MCF 10A (cell line): ENCODE measurements at regions of chr6 and their contacts with region 1.

Region 1: DNA sequence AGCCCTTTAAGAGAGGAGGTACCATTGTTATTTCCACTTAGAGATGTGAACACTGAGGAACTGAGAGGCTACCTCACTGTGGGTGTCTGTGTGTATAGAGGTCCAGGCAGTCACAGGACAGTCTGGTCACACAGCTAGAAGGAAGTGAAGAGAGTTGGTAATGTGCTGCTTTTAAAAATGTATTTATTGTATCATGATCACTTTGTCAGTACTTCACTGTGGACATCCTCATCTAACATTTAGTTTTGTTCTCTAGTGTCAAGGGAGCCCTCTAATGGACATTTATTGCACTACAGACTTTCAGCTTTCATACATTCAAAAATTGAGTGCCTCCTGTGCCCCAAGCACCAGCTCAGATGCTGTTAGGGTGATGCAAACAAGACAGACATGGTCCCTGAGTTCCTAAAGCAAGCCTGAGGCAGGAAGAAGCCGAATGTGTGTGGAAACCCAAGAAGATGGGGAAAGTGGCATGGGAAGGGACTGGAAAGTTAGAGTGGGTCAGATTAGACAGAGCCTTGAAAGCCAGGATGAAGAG is 123.0 kb downstream of the SLC16A10 start:
- DNase-seq: peak; percentile 69
- H3K4me3 Mint-ChIP-seq: no peak overlapping the region
- H3K27ac Mint-ChIP-seq: no peak overlapping the region
- H3K4me1 Mint-ChIP-seq: no peaks in the 10 kb centered on the region
- H3K27me3 Mint-ChIP-seq: no peaks in the 10 kb centered on the region
- CTCF ChIP-seq: peak; percentile 60

Region 2: GRCh38 chr6:110528101-110528929 is 681.9 kb before region 1 on chr6:
- CTCF ChIA-PET with region 1: no interaction called
- POLR2A ChIA-PET with region 1: no interaction called
- intact Hi-C with region 1: loop called (anchors 1 kb)
- DNase-seq: peak; percentile 76
- H3K4me3 Mint-ChIP-seq: no peak overlapping the region
- H3K27ac Mint-ChIP-seq: peak overlapping the region; percentile 66
- H3K4me1 Mint-ChIP-seq: peaks cover 21% of the 10 kb centered on the region
- H3K27me3 Mint-ChIP-seq: no peaks in the 10 kb centered on the region
- CTCF ChIP-seq: peak; percentile 76

Region 3: DNA sequence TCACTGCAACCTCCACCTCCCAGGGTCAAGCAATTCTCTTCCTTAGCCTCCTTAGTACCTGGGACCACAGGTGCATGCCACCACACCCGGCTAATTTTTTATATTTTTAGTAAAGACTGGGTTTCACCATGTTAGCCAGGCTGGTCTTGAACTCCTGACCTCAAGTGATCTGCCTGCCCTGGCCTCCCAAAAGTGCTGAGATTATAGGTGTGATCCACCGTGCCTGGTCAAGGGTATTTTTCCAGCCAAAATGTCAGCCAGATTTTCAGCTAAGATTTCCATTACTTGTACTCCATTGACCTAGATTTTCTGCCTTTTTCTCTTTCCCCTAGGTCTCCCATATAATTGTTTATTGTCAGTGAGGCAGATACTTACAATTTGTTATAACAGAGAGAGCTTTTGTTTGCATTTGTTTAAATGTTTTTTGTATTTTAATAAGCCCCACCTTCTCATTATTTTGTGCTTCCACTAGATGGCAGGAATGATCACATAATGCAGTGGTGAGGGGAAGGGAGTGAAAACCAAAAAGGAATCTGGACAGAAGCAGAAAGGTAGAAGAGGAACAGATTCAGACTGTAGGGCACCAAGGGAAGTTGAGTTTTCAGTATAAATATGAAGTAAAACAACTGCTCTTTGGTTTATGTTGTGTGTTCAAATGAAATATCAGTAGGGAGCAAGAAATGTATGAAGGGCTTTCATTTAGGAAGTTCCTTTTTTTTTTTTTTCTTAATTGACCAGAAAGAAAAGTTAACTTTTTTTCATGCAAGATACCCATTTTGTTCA is 198.7 kb before region 1 on chr6:
- CTCF ChIA-PET with region 1: interaction called, 51 read pairs
- POLR2A ChIA-PET with region 1: no interaction called
- intact Hi-C with region 1: loop called (anchors 1 kb)
- DNase-seq: peak; percentile 55
- H3K4me3 Mint-ChIP-seq: no peak overlapping the region
- H3K27ac Mint-ChIP-seq: no peak overlapping the region
- H3K4me1 Mint-ChIP-seq: no peaks in the 10 kb centered on the region
- H3K27me3 Mint-ChIP-seq: no peaks in the 10 kb centered on the region
- CTCF ChIP-seq: peak; percentile 45

Region 4: GRCh38 chr6:111052036-111052570 is 158.2 kb before region 1 on chr6:
- CTCF ChIA-PET with region 1: interaction called, 60 read pairs
- POLR2A ChIA-PET with region 1: interaction called, 4 read pairs
- intact Hi-C with region 1: loop called (anchors 1 kb)
- DNase-seq: no peak
- H3K4me3 Mint-ChIP-seq: no peak overlapping the region
- H3K27ac Mint-ChIP-seq: no peak overlapping the region
- H3K4me1 Mint-ChIP-seq: no peaks in the 10 kb centered on the region
- H3K27me3 Mint-ChIP-seq: peaks cover 14% of the 10 kb centered on the region
- CTCF ChIP-seq: no peak

Region 5: GRCh38 chr6:111057074-111057752 is 153.0 kb before region 1 on chr6:
- CTCF ChIA-PET with region 1: interaction called, 60 read pairs
- POLR2A ChIA-PET with region 1: interaction called, 8 read pairs
- intact Hi-C with region 1: loop called (anchors 1 kb)
- DNase-seq: peak; percentile 62
- H3K4me3 Mint-ChIP-seq: no peak overlapping the region
- H3K27ac Mint-ChIP-seq: no peak overlapping the region
- H3K4me1 Mint-ChIP-seq: no peaks in the 10 kb centered on the region
- H3K27me3 Mint-ChIP-seq: peaks cover 40% of the 10 kb centered on the region
- CTCF ChIP-seq: peak; percentile 56

Region 6: GRCh38 chr6:111220383-111221031 is 10.2 kb after region 1 on chr6:
- CTCF ChIA-PET with region 1: interaction called, 11 read pairs
- POLR2A ChIA-PET with region 1: interaction called, 3 read pairs
- intact Hi-C with region 1: no loop called
- DNase-seq: no peak
- H3K4me3 Mint-ChIP-seq: no peak overlapping the region
- H3K27ac Mint-ChIP-seq: no peak overlapping the region
- H3K4me1 Mint-ChIP-seq: no peaks in the 10 kb centered on the region
- H3K27me3 Mint-ChIP-seq: peaks cover 46% of the 10 kb centered on the region
- CTCF ChIP-seq: no peak

Region 7: DNA sequence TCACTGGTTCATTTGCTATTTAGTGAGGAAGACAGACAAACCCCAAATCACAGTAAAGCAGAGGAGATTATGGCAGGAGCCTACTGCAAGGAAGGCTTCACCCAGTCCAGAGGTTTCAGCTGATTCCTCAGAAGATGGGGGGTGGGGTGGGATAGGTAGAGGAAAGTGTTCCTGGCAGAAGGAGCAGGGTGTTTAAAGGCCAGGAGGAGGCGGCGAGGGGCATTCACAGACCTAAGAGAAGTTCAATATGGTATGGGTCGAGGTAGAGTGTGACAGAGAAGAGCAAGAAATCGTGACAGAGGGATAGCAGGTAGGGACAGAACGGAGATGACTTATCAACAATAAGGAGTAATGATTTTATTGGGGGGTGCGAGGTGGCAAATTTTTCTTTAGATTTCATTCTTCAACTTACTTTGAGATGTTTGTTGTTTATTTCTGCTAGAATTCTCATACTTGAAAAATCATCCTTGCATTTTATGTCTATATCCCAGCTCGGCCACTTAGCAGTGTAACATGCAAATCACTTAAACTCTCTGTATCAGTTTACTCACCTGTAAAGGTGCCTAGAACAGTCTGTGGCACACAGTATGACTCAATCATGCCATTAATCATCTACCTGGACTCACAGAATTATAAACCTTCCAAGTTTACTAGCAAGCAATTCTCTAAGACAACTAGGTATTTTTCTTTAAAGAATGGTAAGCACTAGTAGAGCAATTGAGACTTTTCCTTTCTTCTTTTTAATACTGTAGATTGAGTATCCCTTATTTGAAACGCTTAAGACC is 96.0 kb after region 1 on chr6:
- CTCF ChIA-PET with region 1: no interaction called
- POLR2A ChIA-PET with region 1: no interaction called
- intact Hi-C with region 1: no loop called
- DNase-seq: peak; percentile 9
- H3K4me3 Mint-ChIP-seq: no peak overlapping the region
- H3K27ac Mint-ChIP-seq: no peak overlapping the region
- H3K4me1 Mint-ChIP-seq: no peaks in the 10 kb centered on the region
- H3K27me3 Mint-ChIP-seq: no peaks in the 10 kb centered on the region
- CTCF ChIP-seq: no peak